SK-N-SH (cell line): ENCODE measurements at regions of chr17 and their contacts with region 1.

Region 1: GRCh38 chr17:80991645-80992076 is at the start of gene CHMP6:
- DNase-seq: peak; percentile 99
- H3K4me3 ChIP-seq: peak within 1 kb of the TSS; percentile 79 to 89
- H3K27ac ChIP-seq: no peak within 1 kb of the TSS; a peak in 1 of 4 replicates
- H3K4me1 ChIP-seq: peaks cover 10 to 17% of the 10 kb centered on the region in 2 experiments; a peak in 1 of 4 replicates
- H3K27me3 ChIP-seq: no peaks in the 10 kb centered on the region
- CTCF ChIP-seq: peak; percentile 32
- EP300 ChIP-seq: no peak; a peak in 1 of 4 replicates
- RAD21 ChIP-seq: no peak
- polyA plus RNA-seq, gene CHMP6: 44.1 and 44.3 TPM in 2 replicates

Region 2: DNA sequence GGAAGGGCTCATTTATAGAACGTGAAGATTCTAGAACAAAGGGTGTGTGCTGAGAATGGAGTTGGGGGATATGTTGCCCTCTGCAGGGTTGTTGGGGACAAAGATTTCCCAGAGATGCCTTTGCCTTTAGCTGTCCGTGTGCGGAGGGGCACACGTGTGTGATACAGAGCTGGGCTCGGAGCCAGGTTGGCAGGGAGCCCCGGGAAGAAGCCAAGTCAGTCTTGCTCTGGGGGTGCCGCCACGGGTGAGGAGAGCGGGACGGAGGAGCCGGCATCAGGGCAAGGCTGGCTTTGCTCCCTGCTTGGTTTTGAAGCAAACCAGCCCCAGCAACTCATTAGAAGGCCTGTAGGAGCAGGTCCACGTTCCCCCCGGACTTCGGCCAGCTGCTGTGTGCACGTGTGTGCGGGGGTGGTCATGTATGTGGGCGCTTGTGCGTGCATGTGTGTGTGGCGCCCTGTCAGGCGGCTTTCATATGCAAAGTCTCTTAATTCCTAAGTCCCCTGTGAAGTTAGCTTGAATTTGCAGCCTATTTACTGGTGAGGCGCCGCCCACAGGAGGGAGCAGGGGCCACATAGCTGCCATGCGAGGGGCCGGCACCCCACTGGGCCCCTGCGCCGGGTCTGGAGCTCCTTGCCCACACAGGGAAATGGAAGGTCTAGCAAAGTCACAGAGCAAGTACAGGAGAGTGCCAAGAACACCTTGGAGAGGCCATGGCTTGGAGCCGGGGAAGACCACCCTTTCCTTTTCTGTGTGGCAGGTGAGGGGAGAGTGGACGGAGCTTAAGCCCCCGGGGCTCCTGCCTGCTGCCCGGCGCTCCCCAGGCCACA is 132.1 kb before region 1 on chr17:
- CTCF ChIA-PET with region 1: interaction called, 10 read pairs
- POLR2A ChIA-PET with region 1: no interaction called
- DNase-seq: peak; percentile 88
- H3K4me3 ChIP-seq: no peak overlapping the region
- H3K27ac ChIP-seq: peak overlapping the region; percentile 72 to 96
- H3K4me1 ChIP-seq: peaks cover 35 to 55% of the 10 kb centered on the region in 2 experiments
- H3K27me3 ChIP-seq: no peaks in the 10 kb centered on the region
- CTCF ChIP-seq: peak; percentile 60
- EP300 ChIP-seq: peak; percentile 62 to 63; a peak in 3 of 4 replicates
- RAD21 ChIP-seq: peak; percentile 69

Region 3: DNA sequence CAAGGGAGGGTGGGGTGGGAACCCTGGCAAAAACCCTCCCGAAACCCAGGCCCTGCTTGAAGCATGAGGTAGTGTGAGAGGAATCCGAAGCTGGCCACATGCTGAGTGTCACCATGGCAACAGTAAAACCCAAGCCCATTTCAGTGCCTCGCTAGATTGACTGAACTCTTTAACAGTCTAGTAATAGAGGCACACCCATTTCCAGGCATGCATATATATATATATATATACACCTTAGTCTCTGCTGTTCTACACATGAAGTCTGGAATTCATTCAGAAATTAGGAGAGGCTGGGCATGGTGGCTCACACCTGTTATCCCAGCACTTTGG is 59.8 kb before region 1 on chr17:
- CTCF ChIA-PET with region 1: no interaction called
- POLR2A ChIA-PET with region 1: no interaction called
- DNase-seq: no peak
- H3K4me3 ChIP-seq: no peak overlapping the region
- H3K27ac ChIP-seq: no peak overlapping the region
- H3K4me1 ChIP-seq: no peaks in the 10 kb centered on the region
- H3K27me3 ChIP-seq: no peaks in the 10 kb centered on the region
- CTCF ChIP-seq: no peak
- EP300 ChIP-seq: no peak
- RAD21 ChIP-seq: no peak

Region 4: DNA sequence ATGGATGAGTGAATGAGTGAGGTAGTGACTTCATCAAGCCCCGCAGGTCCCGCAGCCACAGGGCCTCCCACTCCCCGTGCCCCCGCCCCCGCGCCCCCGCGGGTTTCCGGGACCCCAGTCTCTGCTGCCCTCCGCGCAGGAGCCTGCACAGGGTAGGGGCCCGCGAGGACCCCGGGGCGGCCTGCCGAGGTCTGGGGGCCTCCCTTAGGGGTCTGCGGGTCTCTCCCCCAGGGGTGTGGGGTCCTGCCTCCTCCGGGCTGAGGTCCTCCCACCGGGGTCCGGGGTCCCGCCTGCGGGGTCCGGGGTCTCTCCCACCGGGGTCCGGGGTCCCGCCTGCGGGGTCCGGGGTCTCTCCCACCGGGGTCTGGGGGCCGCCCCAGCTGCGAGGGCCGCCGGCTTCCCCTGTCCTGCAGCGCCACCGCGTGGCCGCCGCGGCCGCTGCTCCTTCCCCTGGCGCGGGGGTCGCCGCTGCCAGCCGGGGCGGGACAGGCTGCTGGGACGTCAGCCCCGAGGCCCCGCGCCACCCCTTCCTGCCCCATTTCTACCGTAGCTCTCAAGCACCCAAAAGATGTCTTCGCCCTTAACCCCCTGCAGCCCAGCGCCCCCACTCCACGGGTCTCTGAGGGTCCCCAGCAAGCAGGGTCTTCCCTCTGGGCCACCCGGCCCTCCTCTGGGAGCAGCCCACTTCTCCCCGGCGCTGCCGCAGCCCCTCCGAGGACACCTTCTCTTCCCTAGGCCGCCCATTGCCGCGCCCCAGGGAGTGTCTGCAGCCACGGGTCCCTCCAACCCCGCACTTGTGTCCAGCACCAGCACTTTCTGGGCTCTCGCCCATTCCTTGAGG is 10.4 kb before region 1 on chr17:
- CTCF ChIA-PET with region 1: interaction called, 11 read pairs
- POLR2A ChIA-PET with region 1: no interaction called
- DNase-seq: peak; percentile 99
- H3K4me3 ChIP-seq: peak overlapping the region; percentile 25 to 44
- H3K27ac ChIP-seq: no peak overlapping the region
- H3K4me1 ChIP-seq: no peaks in the 10 kb centered on the region; a peak in 1 of 4 replicates
- H3K27me3 ChIP-seq: no peaks in the 10 kb centered on the region
- CTCF ChIP-seq: peak; percentile 96
- EP300 ChIP-seq: no peak
- RAD21 ChIP-seq: peak; percentile 86

Region 5: DNA sequence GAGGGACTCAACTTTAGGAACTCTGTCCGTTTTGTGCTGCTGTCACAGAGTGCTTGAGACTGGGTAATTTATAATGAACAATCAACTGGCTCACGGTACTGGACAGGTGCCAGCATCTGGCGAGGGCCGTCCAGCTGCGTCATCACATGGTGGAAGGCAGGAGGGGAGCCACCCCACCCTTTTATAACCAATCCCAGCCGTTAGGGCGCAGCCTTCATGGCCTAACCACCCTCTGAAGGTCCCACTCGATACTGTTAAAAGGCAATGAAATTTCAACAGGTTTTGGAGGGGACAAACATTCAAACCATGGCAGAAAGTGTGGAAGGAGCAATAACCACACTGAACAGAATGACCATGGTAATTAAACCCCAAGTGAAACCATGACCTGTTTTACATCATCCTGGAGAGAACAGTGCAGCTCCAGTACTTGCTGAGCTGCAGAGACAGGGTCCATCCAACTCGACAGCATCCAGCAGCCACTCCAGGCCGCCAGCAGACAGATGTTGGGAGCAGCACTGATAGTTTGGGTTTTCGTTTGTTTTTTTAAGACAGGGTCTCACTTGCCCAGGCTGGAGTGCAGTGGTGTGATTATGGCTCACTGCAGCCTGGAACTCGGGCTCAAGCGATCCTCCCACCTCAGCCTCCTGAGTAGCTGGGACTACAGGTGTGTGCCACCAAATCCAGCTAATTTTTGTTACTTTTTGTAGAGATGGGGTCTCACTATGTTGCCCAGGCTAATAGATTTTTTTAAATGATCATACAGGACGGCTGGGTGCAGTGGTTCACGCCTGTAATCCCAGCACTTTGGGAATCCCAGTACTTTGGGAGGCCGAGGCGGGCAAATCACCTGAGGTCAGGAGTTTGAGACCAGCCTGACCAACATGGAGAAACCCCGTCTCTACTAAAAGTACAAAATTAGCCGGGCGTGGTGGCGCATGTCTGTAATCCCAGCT is 11.0 kb after region 1 on chr17:
- CTCF ChIA-PET with region 1: interaction called, 32 read pairs
- POLR2A ChIA-PET with region 1: no interaction called
- DNase-seq: peak; percentile 92
- H3K4me3 ChIP-seq: no peak overlapping the region
- H3K27ac ChIP-seq: no peak overlapping the region
- H3K4me1 ChIP-seq: peaks cover 5 to 14% of the 10 kb centered on the region in 2 experiments; a peak in 1 of 4 replicates
- H3K27me3 ChIP-seq: peaks cover 51% of the 10 kb centered on the region
- CTCF ChIP-seq: no peak
- EP300 ChIP-seq: 0 out of 4 replicates have a peak, but pooled peaks of 1 of the 2 experiments have one; percentile 13
- RAD21 ChIP-seq: no peak

Region 6: DNA sequence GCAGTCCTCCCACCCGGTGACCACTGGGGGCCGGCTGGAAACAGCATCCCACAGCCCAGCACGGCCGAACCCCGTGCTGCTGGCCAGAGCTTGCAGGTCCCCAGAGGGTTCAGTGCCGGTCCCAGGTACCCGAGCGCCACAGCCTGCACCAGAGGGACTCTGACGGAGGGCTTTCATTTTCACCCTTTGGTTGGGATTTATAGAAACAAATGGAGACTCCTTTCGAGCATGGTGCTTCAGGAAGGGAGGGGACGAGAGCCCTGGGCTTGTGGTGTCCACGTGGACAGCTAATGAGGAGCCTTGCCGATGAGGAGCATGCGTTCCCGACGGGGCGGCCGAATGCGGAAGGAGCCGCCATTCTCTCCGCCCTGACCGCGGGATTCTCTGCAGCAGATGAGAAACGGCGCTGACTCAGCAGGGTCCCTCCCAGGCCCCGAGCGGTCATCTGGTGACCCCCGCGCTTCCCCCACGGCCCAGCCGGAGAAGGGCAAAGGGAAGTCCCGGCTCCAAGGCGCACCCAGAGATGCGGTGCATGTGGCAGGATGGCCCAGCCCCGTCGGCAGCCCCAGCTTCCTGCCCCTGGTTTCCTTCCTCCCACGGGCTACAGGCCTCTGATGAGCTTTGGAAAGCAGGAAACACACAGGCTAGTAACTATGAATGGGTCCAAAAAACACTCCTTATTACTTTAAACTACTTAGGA is 293.7 kb after region 1 on chr17:
- CTCF ChIA-PET with region 1: no interaction called
- POLR2A ChIA-PET with region 1: no interaction called
- DNase-seq: no peak
- H3K4me3 ChIP-seq: no peak overlapping the region
- H3K27ac ChIP-seq: no peak overlapping the region
- H3K4me1 ChIP-seq: no peaks in the 10 kb centered on the region
- H3K27me3 ChIP-seq: no peaks in the 10 kb centered on the region
- CTCF ChIP-seq: no peak
- EP300 ChIP-seq: no peak
- RAD21 ChIP-seq: no peak